Activated naive CD4-positive, alpha-beta T cell treated with anti-CD3 and anti-CD28 coated beads for 36 hours (primary cell): ENCODE measurements at regions of chr15 and their contacts with region 1.

Region 1: GRCh38 chr15:59688841-59689625 is at the start of gene BNIP2:
- DNase-seq: peak; percentile 99
- H3K4me3 Mint-ChIP-seq: peak within 1 kb of the TSS; percentile 87
- H3K27ac Mint-ChIP-seq: peak within 1 kb of the TSS; percentile 93
- H3K4me1 Mint-ChIP-seq: peaks cover 43% of the 10 kb centered on the region
- H3K27me3 Mint-ChIP-seq: no peaks in the 10 kb centered on the region
- total RNA-seq, gene BNIP2: 44.2 to 44.7 TPM

Region 2: GRCh38 chr15:57706405-57707209 is 1982.4 kb before region 1 on chr15 and contains the start of gene POLR2M:
- CTCF ChIA-PET with region 1: no interaction called
- intact Hi-C with region 1: loop called (anchors 2 kb)
- DNase-seq: peak; percentile 98
- H3K4me3 Mint-ChIP-seq: peak within 1 kb of the TSS; percentile 90
- H3K27ac Mint-ChIP-seq: peak within 1 kb of the TSS; percentile 93
- H3K4me1 Mint-ChIP-seq: peaks cover 79% of the 10 kb centered on the region
- H3K27me3 Mint-ChIP-seq: no peaks in the 10 kb centered on the region
- total RNA-seq, gene POLR2M: 107 to 114 TPM

Region 3: GRCh38 chr15:59656897-59657634 is 32.0 kb before region 1 on chr15 and contains the start of gene GTF2A2:
- CTCF ChIA-PET with region 1: no interaction called
- intact Hi-C with region 1: loop called (anchors 1 kb)
- DNase-seq: peak; percentile 96
- H3K4me3 Mint-ChIP-seq: peak within 1 kb of the TSS; percentile 28
- H3K27ac Mint-ChIP-seq: peak within 1 kb of the TSS; percentile 61
- H3K4me1 Mint-ChIP-seq: peaks cover 10% of the 10 kb centered on the region
- H3K27me3 Mint-ChIP-seq: no peaks in the 10 kb centered on the region
- total RNA-seq, gene GTF2A2: 146 to 155 TPM

Region 4: GRCh38 chr15:59792359-59792758 is 103.3 kb after region 1 on chr15:
- CTCF ChIA-PET with region 1: no interaction called
- intact Hi-C with region 1: loop called (anchors 10 kb)
- DNase-seq: peak; percentile 49
- H3K4me3 Mint-ChIP-seq: no peak overlapping the region
- H3K27ac Mint-ChIP-seq: no peak overlapping the region
- H3K4me1 Mint-ChIP-seq: peaks cover 52% of the 10 kb centered on the region
- H3K27me3 Mint-ChIP-seq: no peaks in the 10 kb centered on the region

Region 5: DNA sequence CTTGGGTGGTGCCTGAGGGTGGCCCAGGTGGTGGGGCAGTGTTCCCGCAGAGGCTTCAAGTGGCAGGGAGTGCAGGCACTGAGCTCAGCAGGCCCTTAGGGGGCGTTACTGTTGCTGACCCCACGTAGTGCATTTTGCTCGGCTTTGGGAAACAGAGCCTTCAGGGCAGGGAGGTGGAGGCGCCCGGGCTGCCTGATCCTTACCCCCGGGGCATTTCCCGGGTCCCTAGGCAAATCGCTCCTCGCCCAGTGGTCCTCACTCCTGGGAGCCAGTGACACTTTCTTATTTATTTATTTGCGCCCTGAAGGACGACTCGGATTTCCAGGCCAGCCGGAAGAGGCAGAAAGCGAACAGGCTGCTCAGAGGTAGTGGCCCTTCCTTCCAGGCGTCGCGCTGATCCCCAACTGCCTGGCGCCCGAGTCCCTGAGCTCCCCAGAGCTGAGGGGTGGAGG is 304.9 kb after region 1 on chr15:
- CTCF ChIA-PET with region 1: no interaction called
- intact Hi-C with region 1: no loop called
- DNase-seq: peak; percentile 24
- H3K4me3 Mint-ChIP-seq: no peak overlapping the region
- H3K27ac Mint-ChIP-seq: no peak overlapping the region
- H3K4me1 Mint-ChIP-seq: peaks cover 29% of the 10 kb centered on the region
- H3K27me3 Mint-ChIP-seq: peaks cover 65% of the 10 kb centered on the region

Region 6: DNA sequence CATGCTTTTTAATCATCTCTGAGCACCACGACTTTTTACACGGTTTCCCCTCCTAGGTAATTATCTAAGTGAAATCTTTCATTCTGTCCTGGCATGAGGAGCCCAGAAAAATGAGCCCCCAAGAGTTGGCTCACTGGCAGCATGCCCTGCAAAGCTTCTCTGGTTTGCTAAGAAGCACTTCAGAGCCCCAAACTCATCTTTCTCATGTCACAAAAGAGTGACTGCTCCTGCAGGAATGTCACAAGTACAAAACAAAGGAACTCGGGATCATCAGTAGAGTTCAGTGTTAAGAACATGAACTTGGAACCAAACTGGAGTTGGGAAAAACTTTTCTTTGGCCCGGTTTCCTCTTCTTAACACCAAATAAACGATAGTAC is 439.0 kb after region 1 on chr15:
- CTCF ChIA-PET with region 1: interaction called, 4 read pairs
- intact Hi-C with region 1: loop called (anchors 1 kb)
- DNase-seq: no peak
- H3K4me3 Mint-ChIP-seq: peak overlapping the region; percentile 59
- H3K27ac Mint-ChIP-seq: peak overlapping the region; percentile 56
- H3K4me1 Mint-ChIP-seq: peaks cover 40% of the 10 kb centered on the region
- H3K27me3 Mint-ChIP-seq: no peaks in the 10 kb centered on the region

Region 7: GRCh38 chr15:60326824-60327654 is 638.0 kb after region 1 on chr15:
- CTCF ChIA-PET with region 1: interaction called, 4 read pairs
- intact Hi-C with region 1: loop called (anchors 1 kb)
- DNase-seq: peak; percentile 54
- H3K4me3 Mint-ChIP-seq: no peak overlapping the region
- H3K27ac Mint-ChIP-seq: no peak overlapping the region
- H3K4me1 Mint-ChIP-seq: peaks cover 2% of the 10 kb centered on the region
- H3K27me3 Mint-ChIP-seq: peaks cover 20% of the 10 kb centered on the region

Region 8: GRCh38 chr15:60548101-60548500 is 859.1 kb after region 1 on chr15:
- CTCF ChIA-PET with region 1: no interaction called
- intact Hi-C with region 1: loop called (anchors 10 kb)
- DNase-seq: peak; percentile 83
- H3K4me3 Mint-ChIP-seq: peak overlapping the region; percentile 39
- H3K27ac Mint-ChIP-seq: peak overlapping the region; percentile 80
- H3K4me1 Mint-ChIP-seq: peaks cover 92% of the 10 kb centered on the region
- H3K27me3 Mint-ChIP-seq: no peaks in the 10 kb centered on the region

Region 9: GRCh38 chr15:60871731-60872130 is 1182.7 kb after region 1 on chr15:
- CTCF ChIA-PET with region 1: no interaction called
- intact Hi-C with region 1: no loop called
- DNase-seq: no peak
- H3K4me3 Mint-ChIP-seq: no peak overlapping the region
- H3K27ac Mint-ChIP-seq: no peak overlapping the region
- H3K4me1 Mint-ChIP-seq: no peaks in the 10 kb centered on the region
- H3K27me3 Mint-ChIP-seq: no peaks in the 10 kb centered on the region